Ascending aorta (tissue), 2 donors: ENCODE measurements at regions of chrX and their contacts with region 1.

Region 1: DNA sequence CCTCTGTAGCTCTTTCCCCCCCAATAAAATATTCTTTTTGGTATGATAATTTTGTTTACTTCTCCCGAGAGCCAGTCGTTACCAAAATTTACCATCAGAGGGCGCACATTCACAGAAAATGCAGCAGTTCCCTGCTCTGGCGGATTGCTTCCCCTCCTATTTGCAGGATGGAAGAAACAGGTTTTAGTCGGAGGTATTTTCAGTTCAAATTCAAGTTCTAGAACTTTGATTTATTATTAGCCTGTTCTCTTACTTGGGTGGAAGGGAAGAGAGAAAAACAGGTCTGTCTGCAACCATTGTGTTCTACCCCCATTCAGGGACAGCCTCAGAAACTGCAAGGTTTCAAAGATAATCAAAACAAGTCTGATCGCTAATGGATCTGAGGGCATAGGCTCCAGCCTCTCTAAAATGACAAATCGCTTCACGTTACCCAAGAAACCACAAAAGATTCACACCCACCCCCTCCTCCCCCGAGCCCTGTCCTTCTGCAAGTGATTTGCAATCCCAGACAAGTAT is 263.8 kb upstream of the RPS6KA3 start:
- DNase-seq: peak in 1 of 2 donors; percentile 72
- H3K4me3 ChIP-seq: peak overlapping the region in 1 of 2 donors; percentile 15
- H3K27ac ChIP-seq: no peak overlapping the region
- H3K4me1 ChIP-seq: peaks cover 0 to 9% of the 10 kb centered on the region in 2 donors
- H3K27me3 ChIP-seq: peaks cover 3% of the 10 kb centered on the region
- CTCF ChIP-seq: peak; percentile 37 to 80 (median 63)

Region 2: GRCh38 chrX:20585782-20586181 is 55.3 kb after region 1 on chrX:
- intact Hi-C with region 1: no loop called
- DNase-seq: no peak
- H3K4me3 ChIP-seq: no peak overlapping the region
- H3K27ac ChIP-seq: no peak overlapping the region
- H3K4me1 ChIP-seq: no peaks in the 10 kb centered on the region
- H3K27me3 ChIP-seq: no peaks in the 10 kb centered on the region
- CTCF ChIP-seq: no peak

Region 3: DNA sequence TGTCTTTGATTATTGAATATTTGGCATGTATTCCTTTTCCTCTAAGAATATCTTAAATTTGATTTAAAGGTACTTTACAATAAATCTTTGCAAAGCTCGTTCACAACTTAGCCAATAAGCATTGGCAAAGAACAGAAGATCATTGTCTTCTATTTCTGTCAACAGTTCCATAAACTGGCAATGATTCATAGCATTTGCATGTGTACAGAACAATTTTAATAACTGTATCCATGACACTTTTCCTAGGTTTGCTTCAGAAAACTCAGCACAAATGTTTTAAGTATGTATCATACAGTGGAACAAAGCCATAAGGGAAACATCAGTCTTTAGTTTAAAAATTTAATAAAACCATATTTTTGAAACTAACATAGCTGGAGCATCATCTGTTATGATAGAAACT is 199.0 kb after region 1 on chrX:
- intact Hi-C with region 1: no loop called
- DNase-seq: no peak
- H3K4me3 ChIP-seq: no peak overlapping the region
- H3K27ac ChIP-seq: no peak overlapping the region
- H3K4me1 ChIP-seq: no peaks in the 10 kb centered on the region
- H3K27me3 ChIP-seq: no peaks in the 10 kb centered on the region
- CTCF ChIP-seq: no peak

Region 4: GRCh38 chrX:21479695-21480270 is 949.3 kb after region 1 on chrX:
- intact Hi-C with region 1: loop called (anchors 5 kb)
- DNase-seq: no peak
- H3K4me3 ChIP-seq: no peak overlapping the region
- H3K27ac ChIP-seq: no peak overlapping the region
- H3K4me1 ChIP-seq: no peaks in the 10 kb centered on the region
- H3K27me3 ChIP-seq: no peaks in the 10 kb centered on the region
- CTCF ChIP-seq: peak in 1 of 3 experiments; percentile 53

Region 5: DNA sequence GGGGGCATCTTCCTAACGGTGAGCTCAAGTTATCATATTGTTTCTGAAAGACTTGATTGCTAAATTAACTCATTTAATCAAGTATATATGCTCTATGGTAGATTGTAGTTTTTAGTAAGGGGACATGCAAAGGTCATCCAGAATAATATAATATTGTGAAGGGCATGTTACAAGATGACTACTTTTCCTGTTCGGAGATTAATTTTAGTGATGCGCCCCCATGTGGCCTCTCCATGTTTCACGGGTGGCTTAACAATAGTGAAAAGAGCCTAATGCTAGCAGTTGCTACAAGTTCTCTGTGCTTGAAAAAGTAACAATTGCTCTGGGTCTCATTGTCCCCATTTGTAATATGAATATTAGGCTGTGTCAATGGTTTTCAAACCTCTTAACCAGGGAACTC is 1215.3 kb after region 1 on chrX:
- intact Hi-C with region 1: loop called (anchors 5 kb)
- DNase-seq: no peak
- H3K4me3 ChIP-seq: no peak overlapping the region
- H3K27ac ChIP-seq: no peak overlapping the region
- H3K4me1 ChIP-seq: no peaks in the 10 kb centered on the region
- H3K27me3 ChIP-seq: no peaks in the 10 kb centered on the region
- CTCF ChIP-seq: peak in 2 of 3 experiments; percentile 46 to 50

Region 6: GRCh38 chrX:21963731-21964405 is 1433.4 kb after region 1 on chrX:
- intact Hi-C with region 1: loop called (anchors 10 kb)
- DNase-seq: no peak
- H3K4me3 ChIP-seq: no peak overlapping the region
- H3K27ac ChIP-seq: peak overlapping the region; percentile 45 to 76
- H3K4me1 ChIP-seq: peaks cover 0 to 6% of the 10 kb centered on the region in 2 donors
- H3K27me3 ChIP-seq: no peaks in the 10 kb centered on the region
- CTCF ChIP-seq: no peak